ENCODE measurements at regions of chr13 and their contacts with region 1.

Region 1: DNA sequence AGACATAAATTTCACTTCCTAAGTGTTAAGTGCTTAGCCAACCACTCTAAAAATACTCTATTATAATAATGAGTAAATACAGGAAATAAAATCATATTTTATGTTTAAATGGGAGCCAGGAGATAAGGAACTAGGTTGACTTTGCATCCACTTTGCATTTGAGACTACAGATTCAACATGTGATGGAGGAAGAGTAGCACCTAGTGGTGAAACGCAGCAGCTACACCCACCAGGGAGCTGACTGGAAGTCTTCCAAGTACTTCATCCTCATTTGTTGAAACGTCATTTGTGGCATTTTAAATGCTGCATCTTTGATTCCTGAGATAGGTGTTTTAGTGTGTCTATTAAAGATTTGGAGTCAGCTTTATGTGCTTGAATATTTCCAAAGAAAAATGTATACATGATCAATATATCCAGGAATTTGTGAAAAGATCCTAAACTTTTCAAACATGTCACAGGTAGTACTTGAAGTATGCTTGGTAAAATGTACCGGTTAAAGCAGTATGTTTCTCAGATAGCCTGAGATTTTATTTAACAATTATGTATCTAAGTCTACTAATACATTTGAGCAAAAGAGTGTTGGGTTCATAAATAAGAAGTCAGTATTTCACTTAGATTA is 17.4 kb upstream of the KCTD12 start:
- DNase-seq: peak; percentile 65
- H3K4me3 ChIP-seq: no peak overlapping the region
- H3K27ac ChIP-seq: no peak overlapping the region
- H3K4me1 ChIP-seq: no peaks in the 10 kb centered on the region
- H3K27me3 ChIP-seq: no peaks in the 10 kb centered on the region
- CTCF ChIP-seq: peak; percentile 90 to 99 (median 96)
- EP300 ChIP-seq: no peak
- POLR2A ChIP-seq: no peak

Region 2: DNA sequence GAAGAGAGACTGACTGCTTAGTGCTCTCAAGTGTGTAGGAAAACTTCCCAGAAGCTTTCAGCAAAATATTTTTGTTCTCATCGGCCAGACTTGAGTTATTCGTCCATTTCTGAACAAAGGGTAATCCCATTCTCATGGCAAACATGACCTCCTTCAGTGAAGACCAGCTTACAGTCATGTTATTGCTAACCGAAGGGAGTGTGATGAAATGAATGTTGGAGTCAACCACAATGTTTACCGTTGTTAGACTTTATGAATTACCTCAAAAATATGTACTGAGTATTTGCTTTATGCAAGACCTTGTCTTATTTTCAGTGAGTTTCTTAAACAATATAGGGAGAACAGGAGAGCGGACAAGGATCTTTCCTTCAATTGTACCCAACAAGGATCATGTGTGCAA is 1038.9 kb before region 1 on chr13:
- in situ Hi-C with region 1: loop called in 1 of 4 experiments (anchors 10 kb)
- intact Hi-C with region 1: no loop called
- DNase-seq: no peak
- H3K4me3 ChIP-seq: no peak overlapping the region
- H3K27ac ChIP-seq: no peak overlapping the region
- H3K4me1 ChIP-seq: no peaks in the 10 kb centered on the region
- H3K27me3 ChIP-seq: peaks cover 6% of the 10 kb centered on the region
- CTCF ChIP-seq: no peak
- EP300 ChIP-seq: no peak
- POLR2A ChIP-seq: no peak

Region 3: GRCh38 chr13:75876360-75877050 is 1027.1 kb before region 1 on chr13:
- in situ Hi-C with region 1: loop called in 3 of 4 experiments (anchors 5 to 10 kb)
- intact Hi-C with region 1: loop called (anchors 2 kb)
- DNase-seq: peak; percentile 53
- H3K4me3 ChIP-seq: no peak overlapping the region
- H3K27ac ChIP-seq: no peak overlapping the region
- H3K4me1 ChIP-seq: peaks cover 0 to 9% (median 0%) of the 10 kb centered on the region in 4 donors
- H3K27me3 ChIP-seq: no peaks in the 10 kb centered on the region
- CTCF ChIP-seq: peak; percentile 82 to 91 (median 87)
- EP300 ChIP-seq: no peak
- POLR2A ChIP-seq: no peak

Region 4: GRCh38 chr13:76473552-76474134 is 430.0 kb before region 1 on chr13:
- in situ Hi-C with region 1: loop called in 3 of 4 experiments (anchors 10 to 25 kb)
- intact Hi-C with region 1: no loop called
- DNase-seq: peak; percentile 73
- H3K4me3 ChIP-seq: no peak overlapping the region
- H3K27ac ChIP-seq: no peak overlapping the region
- H3K4me1 ChIP-seq: no peaks in the 10 kb centered on the region
- H3K27me3 ChIP-seq: no peaks in the 10 kb centered on the region
- CTCF ChIP-seq: peak; percentile 84 to 92 (median 85)
- EP300 ChIP-seq: no peak
- POLR2A ChIP-seq: no peak

Region 5: GRCh38 chr13:76667551-76667950 is 236.1 kb before region 1 on chr13:
- in situ Hi-C with region 1: loop called in 2 of 4 experiments (anchors 25 kb)
- intact Hi-C with region 1: no loop called
- DNase-seq: no peak
- H3K4me3 ChIP-seq: no peak overlapping the region
- H3K27ac ChIP-seq: no peak overlapping the region
- H3K4me1 ChIP-seq: peaks cover 0 to 4% (median 0%) of the 10 kb centered on the region in 4 donors
- H3K27me3 ChIP-seq: no peaks in the 10 kb centered on the region
- CTCF ChIP-seq: peak in 4 of 5 experiments; percentile 13 to 40 (median 28)
- EP300 ChIP-seq: no peak
- POLR2A ChIP-seq: no peak

Measured in transverse colon (tissue), 4 donors.